Endothelial cell of umbilical vein (primary cell): ENCODE measurements at regions of chr5 and their contacts with region 1.

Region 1: GRCh38 chr5:75265731-75266130 is 29.1 kb upstream of the ANKRD31 start:
- DNase-seq: peak; percentile 28
- H3K4me3 ChIP-seq: no peak overlapping the region
- H3K27ac ChIP-seq: no peak overlapping the region
- H3K4me1 ChIP-seq: no peaks in the 10 kb centered on the region
- H3K27me3 ChIP-seq: no peaks in the 10 kb centered on the region
- CTCF ChIP-seq: peak in 1 of 2 donors; percentile 30
- POLR2A ChIP-seq: no peak

Region 2: DNA sequence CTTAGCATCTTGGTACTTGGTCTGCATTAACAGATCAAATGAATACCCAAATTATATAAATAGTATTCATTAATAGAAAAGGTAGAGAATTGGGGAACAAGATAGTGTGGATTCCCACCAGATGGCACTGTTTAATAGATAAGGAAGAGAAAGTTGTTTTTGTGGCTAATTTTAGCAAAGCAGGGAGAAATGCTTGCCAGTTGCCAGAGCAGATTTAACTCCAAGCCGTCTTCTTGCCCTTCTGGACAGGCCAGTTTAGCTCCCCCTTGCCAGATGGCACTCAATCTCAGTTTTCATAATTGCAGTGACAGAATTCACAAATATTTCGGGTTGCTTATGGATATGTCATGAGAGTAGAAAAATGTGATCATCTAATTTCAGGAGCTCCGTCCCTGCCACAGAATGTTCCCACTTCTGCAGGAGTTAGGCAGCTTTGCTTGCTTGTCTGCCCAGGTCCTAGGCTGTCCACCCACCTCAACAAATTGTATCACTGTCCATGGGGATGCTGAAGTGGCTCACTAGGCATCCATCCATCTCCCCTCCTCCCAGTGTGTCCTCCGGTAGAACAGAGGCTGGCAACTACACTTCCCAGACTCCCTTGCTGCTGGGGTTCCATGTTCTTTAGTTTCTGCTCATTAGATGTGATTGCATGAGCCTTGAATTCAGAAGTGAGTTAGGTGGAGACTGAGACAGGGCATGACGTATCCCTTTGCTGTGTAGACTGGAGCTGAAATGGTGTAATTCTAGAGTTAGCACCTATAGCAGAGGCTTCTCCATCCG is 592.5 kb before region 1 on chr5:
- CTCF ChIA-PET with region 1: no interaction called
- POLR2A ChIA-PET with region 1: no interaction called
- dilution Hi-C with region 1: no loop called
- intact Hi-C with region 1: loop called (anchors 5 kb)
- DNase-seq: peak; percentile 34
- H3K4me3 ChIP-seq: no peak overlapping the region
- H3K27ac ChIP-seq: no peak overlapping the region
- H3K4me1 ChIP-seq: no peaks in the 10 kb centered on the region
- H3K27me3 ChIP-seq: peaks cover 3% of the 10 kb centered on the region in 2 experiments
- CTCF ChIP-seq: peak; percentile 7 to 23
- POLR2A ChIP-seq: no peak